RWPE1 (cell line): ENCODE measurements at regions of chr6 and their contacts with region 1.

Region 1: DNA sequence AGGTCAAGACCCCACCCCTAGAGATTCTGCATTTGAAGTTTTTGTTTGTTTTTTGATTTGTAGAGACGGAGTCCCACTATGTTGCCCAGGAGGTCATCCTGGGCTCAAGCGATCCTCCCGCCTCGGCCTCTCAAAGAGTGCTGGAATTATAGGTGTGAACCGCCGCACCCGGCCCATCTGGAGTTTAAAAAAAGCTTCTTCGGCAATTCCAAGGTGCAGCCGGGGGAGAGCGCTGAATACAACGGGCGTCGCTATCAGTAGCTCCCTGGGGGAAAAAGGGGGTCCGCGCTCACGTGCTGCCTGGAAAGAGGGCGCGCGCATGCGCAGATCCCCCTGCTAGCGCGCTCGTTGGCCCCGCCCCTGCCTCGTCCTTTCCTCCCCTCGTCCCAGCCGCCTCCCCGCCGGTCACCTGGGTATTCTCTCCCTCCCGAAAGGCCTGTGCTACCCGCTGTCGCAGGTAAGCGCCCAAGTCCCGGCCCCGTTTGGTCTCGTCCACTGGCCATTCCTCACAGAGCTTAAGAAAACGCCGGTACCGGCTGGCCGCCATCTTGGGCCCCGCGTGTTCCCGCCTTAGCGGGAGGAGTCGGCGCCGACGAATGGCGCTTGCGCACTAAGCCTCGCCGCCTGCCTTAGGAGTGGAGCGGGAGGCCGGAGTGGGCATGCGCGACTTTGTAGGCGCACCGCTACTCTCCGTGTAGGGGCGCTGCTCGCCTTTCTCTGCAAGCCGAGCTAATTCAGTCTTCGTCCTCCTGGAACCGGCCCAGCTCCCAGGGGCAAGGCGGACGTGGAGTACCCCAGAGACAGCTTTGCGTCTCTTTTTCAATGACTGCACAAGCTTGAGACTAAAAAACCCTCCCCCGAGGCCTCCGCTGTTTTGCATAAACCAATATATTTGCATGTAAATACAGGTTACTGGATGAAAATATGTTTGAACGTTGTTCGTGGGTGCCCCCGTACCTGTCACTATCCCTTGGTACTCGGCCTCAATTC is at the start of gene UQCC2:
- DNase-seq: peak; percentile 98
- H3K27ac ChIP-seq: peak within 1 kb of the TSS; percentile 91
- CTCF ChIP-seq: peak; percentile 87

Region 2: GRCh38 chr6:33761922-33762629 is 50.6 kb after region 1 on chr6:
- CTCF ChIA-PET with region 1: interaction called, 40 read pairs
- POLR2A ChIA-PET with region 1: no interaction called
- DNase-seq: peak; percentile 44
- H3K27ac ChIP-seq: peak overlapping the region; percentile 59
- CTCF ChIP-seq: peak; percentile 73